CD8-positive, alpha-beta T cell (primary cell): ENCODE measurements at regions of chr3 and their contacts with region 1.

Region 1: GRCh38 chr3:47065681-47066080 is 86.2 kb downstream of the NBEAL2 start:
- DNase-seq: no peak
- ATAC-seq: no peak
- H3K4me3 ChIP-seq: no peak overlapping the region
- H3K4me3 Mint-ChIP-seq: no peak overlapping the region
- H3K27ac ChIP-seq: no peak overlapping the region
- H3K27ac Mint-ChIP-seq: no peak overlapping the region
- H3K4me1 ChIP-seq: no peaks in the 10 kb centered on the region
- H3K4me1 Mint-ChIP-seq: peaks cover 15% of the 10 kb centered on the region
- H3K27me3 ChIP-seq: no peaks in the 10 kb centered on the region
- H3K27me3 Mint-ChIP-seq: no peaks in the 10 kb centered on the region
- CTCF ChIP-seq: no peak

Region 2: GRCh38 chr3:47009225-47010110 is 56.2 kb before region 1 on chr3:
- CTCF ChIA-PET with region 1: no interaction called
- POLR2A ChIA-PET with region 1: no interaction called
- intact Hi-C with region 1: loop called in 1 of 2 experiments (anchors 10 kb)
- DNase-seq: peak; percentile 43 to 92 (median 86)
- ATAC-seq: peak; percentile 91
- H3K4me3 ChIP-seq: peak overlapping the region; percentile 52 to 66
- H3K4me3 Mint-ChIP-seq: peak overlapping the region; percentile 70
- H3K27ac ChIP-seq: peak overlapping the region; percentile 56 to 64
- H3K27ac Mint-ChIP-seq: peak overlapping the region; percentile 83
- H3K4me1 ChIP-seq: peaks cover 8% of the 10 kb centered on the region
- H3K4me1 Mint-ChIP-seq: peaks cover 8% of the 10 kb centered on the region
- H3K27me3 ChIP-seq: no peaks in the 10 kb centered on the region
- H3K27me3 Mint-ChIP-seq: no peaks in the 10 kb centered on the region
- CTCF ChIP-seq: no peak